Vagina (tissue), 2 donors: ENCODE measurements at regions of chr7 and their contacts with region 1.

Region 1: DNA sequence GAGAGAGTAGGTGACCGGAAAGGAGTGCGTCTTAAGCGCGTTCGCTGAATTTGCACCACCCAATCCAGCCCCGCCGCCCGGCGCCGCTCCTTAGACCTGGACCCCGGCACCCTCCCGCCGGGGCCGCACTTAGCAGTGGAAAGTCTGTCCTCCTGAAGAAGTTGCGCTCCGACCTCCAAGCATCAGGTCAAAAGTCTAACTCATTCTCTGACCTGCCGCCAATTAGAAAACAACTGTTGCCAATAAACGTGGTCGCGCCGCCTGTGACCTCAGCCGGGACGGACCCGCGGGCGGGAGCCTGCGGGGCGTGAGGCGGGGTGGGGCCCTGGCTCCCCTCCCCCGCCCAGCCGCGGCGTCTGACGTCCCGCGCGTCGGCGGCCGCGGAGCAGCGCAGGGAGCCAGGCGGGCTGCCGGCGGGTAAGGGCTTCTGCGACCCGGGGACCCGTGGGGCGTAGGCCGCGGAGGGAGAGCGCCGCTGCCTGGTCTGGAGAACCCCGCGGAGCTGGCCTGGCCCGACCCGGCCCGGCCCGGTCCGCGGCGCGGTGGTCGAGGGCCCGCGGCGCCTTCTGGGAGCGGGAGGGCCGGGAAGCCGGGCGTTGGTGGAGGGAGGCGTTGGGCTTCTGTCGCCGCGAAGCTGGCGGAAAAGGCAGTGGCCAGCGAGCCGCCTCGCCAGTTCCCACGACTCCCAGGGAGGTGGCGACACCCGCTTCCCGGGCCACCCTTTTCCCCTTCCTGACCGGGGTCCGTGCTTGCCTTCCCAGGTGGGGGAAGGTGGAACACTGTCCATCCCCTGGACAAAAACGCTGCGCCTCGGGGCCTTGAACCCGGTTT is at the start of gene BCAP29:
- DNase-seq: no peak
- H3K4me3 ChIP-seq: peak within 1 kb of the TSS; percentile 69 to 80
- H3K27ac ChIP-seq: peak within 1 kb of the TSS; percentile 98
- H3K4me1 ChIP-seq: peaks cover 15% of the 10 kb centered on the region
- H3K27me3 ChIP-seq: no peaks in the 10 kb centered on the region
- CTCF ChIP-seq: no peak
- POLR2A ChIP-seq: peak in 1 of 2 donors; percentile 71
- total RNA-seq, gene BCAP29: 92.1 TPM

Region 2: GRCh38 chr7:107312418-107312817 is 267.7 kb before region 1 on chr7:
- intact Hi-C with region 1: no loop called
- DNase-seq: no peak
- H3K4me3 ChIP-seq: no peak overlapping the region
- H3K27ac ChIP-seq: no peak overlapping the region
- H3K4me1 ChIP-seq: peaks cover 15% of the 10 kb centered on the region
- H3K27me3 ChIP-seq: no peaks in the 10 kb centered on the region
- CTCF ChIP-seq: no peak
- POLR2A ChIP-seq: no peak

Region 3: GRCh38 chr7:107327957-107328569 is 252.0 kb before region 1 on chr7:
- intact Hi-C with region 1: no loop called
- DNase-seq: no peak
- H3K4me3 ChIP-seq: no peak overlapping the region
- H3K27ac ChIP-seq: no peak overlapping the region
- H3K4me1 ChIP-seq: no peaks in the 10 kb centered on the region
- H3K27me3 ChIP-seq: no peaks in the 10 kb centered on the region
- CTCF ChIP-seq: no peak
- POLR2A ChIP-seq: no peak

Region 4: DNA sequence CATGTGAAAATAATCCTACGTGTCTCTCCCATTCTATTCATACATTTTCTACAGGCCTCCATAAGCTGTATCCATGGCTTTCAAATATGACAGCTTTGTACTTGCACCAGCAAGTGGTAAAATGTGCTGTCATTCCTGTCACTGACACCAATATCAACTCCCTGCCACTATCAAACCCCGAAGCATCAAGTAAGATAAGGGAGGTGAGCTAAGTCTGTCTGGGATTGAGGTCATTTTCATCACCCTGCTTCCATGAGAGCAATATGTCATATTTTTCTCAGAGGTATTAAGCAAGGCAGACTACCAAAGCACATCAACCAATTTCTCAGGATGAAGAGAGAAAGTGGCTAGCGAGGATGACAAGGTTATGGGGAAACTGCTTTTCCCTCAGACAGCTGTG is 99.2 kb before region 1 on chr7:
- intact Hi-C with region 1: no loop called
- DNase-seq: no peak
- H3K4me3 ChIP-seq: no peak overlapping the region
- H3K27ac ChIP-seq: no peak overlapping the region
- H3K4me1 ChIP-seq: peaks cover 13% of the 10 kb centered on the region
- H3K27me3 ChIP-seq: no peaks in the 10 kb centered on the region
- CTCF ChIP-seq: no peak
- POLR2A ChIP-seq: no peak

Region 5: GRCh38 chr7:107563775-107564552 is 16.1 kb before region 1 on chr7 and contains the starts of genes COG5 and DUS4L:
- intact Hi-C with region 1: loop called (anchors 2 kb)
- DNase-seq: no peak
- H3K4me3 ChIP-seq: peak within 1 kb of the TSS; percentile 84 to 97
- H3K27ac ChIP-seq: peak within 1 kb of the TSS; percentile 97
- H3K4me1 ChIP-seq: peaks cover 52% of the 10 kb centered on the region
- H3K27me3 ChIP-seq: no peaks in the 10 kb centered on the region
- CTCF ChIP-seq: no peak
- POLR2A ChIP-seq: peak in 1 of 2 donors; percentile 70
- total RNA-seq, gene COG5: 55.2 TPM
- total RNA-seq, gene DUS4L: 1.5 TPM

Region 6: DNA sequence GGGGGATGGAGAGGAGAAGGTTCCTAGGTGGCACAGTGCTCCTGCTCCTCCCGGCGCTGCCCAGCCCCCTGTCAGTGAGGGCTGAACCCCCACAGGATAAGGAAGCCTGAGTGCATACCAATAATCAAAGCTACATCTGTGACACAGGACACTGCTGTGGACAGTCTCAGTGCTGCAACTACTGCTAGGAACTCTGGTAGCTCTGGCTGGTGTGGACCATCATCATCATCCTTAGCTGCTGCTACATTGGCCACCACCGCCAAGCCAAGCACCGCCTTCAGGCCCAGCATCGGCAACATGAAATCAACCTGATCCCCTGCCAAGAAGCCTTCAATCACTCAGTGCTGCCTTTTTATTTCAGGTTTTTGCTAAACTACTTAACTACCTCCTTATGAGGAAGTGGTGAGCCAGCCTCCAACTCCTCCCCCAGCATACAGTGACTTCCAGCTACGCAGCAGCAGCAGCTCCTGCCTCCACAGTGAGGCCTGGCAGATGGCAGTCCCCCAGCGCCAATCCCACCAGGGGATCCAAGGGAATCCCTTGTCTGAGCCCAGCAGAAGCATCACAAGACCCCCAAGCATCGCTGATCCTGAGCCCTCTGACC is 48.5 kb after region 1 on chr7:
- intact Hi-C with region 1: no loop called
- DNase-seq: no peak
- H3K4me3 ChIP-seq: no peak overlapping the region
- H3K27ac ChIP-seq: no peak overlapping the region
- H3K4me1 ChIP-seq: no peaks in the 10 kb centered on the region
- H3K27me3 ChIP-seq: no peaks in the 10 kb centered on the region
- CTCF ChIP-seq: no peak
- POLR2A ChIP-seq: no peak